ENCODE measurements at regions of chr2 and their contacts with region 1.

Region 1: GRCh38 chr2:86808315-86809161 is 17.8 kb upstream of the CD8A start:
- DNase-seq: peak; percentile 93 to 98
- ATAC-seq: peak; percentile 89 to 96
- H3K4me3 ChIP-seq: peak overlapping the region; percentile 65
- H3K27ac ChIP-seq: peak overlapping the region; percentile 52 to 79
- H3K4me1 ChIP-seq: peaks cover 9% of the 10 kb centered on the region; the same call in 2 of the 3 replicates
- CTCF ChIP-seq: peak; percentile 96
- EP300 ChIP-seq: no peak
- POLR2A ChIP-seq: no peak
- RAD21 ChIP-seq: peak; percentile 99 to 100

Region 2: GRCh38 chr2:86775338-86775737 is 33.2 kb before region 1 on chr2:
- CTCF ChIA-PET with region 1: interaction called, 10 read pairs
- POLR2A ChIA-PET with region 1: no interaction called
- DNase-seq: no peak
- ATAC-seq: no peak
- H3K4me3 ChIP-seq: no peak overlapping the region
- H3K27ac ChIP-seq: no peak overlapping the region
- H3K4me1 ChIP-seq: no peaks in the 10 kb centered on the region
- CTCF ChIP-seq: no peak
- EP300 ChIP-seq: no peak
- POLR2A ChIP-seq: no peak
- RAD21 ChIP-seq: no peak

Region 3: GRCh38 chr2:86790676-86791572 is 17.6 kb before region 1 on chr2 and contains the start of gene CD8A:
- CTCF ChIA-PET with region 1: interaction called, 13 read pairs
- POLR2A ChIA-PET with region 1: no interaction called
- DNase-seq: no peak
- ATAC-seq: peak in 1 of 2 experiments; percentile 40; a peak in 3 of 6 replicates
- H3K4me3 ChIP-seq: peak within 1 kb of the TSS; percentile 31
- H3K27ac ChIP-seq: no peak within 1 kb of the TSS
- H3K4me1 ChIP-seq: peaks cover 19% of the 10 kb centered on the region; the same call in 2 of the 3 replicates
- CTCF ChIP-seq: no peak
- EP300 ChIP-seq: no peak
- POLR2A ChIP-seq: no peak
- RAD21 ChIP-seq: no peak
- polyA plus RNA-seq, gene CD8A: 0.29 and 0.40 TPM in 2 replicates

Measured in A549 (cell line).